HCT116 (cell line): ENCODE measurements at regions of chr19 and their contacts with region 1.

Region 1: DNA sequence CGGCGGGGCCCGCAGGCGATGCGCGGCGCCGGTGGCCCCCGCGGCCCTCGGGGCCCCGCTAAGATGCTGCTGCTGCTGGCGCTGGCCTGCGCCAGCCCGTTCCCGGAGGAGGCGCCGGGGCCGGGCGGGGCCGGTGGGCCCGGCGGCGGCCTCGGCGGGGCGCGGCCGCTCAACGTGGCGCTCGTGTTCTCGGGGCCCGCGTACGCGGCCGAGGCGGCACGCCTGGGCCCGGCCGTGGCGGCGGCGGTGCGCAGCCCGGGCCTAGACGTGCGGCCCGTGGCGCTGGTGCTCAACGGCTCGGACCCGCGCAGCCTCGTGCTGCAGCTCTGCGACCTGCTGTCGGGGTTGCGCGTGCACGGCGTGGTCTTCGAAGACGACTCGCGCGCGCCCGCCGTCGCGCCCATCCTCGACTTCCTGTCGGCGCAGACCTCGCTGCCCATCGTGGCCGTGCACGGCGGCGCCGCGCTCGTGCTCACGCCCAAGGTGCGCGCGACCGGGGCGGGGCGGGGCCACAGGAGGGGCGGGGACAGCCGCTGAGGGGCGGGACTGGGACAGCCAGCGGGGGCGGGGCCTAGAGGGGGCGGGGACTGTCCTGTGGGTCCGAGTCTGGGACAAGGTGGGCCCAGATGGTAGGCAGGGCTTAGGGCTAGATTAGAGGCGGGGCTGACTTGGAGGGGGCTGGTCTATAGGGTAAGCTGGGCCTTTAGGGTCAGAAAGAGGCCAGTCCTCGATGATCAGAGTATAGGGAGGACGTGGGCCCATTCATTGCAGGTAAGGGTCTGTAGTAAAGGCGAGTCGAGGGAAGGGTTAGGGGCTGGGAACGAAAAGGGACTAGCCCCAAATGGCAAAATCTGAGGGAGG is 5.1 kb downstream of the GRIN2D start:
- DNase-seq: peak; percentile 91
- ATAC-seq: peak; percentile 86
- H3K4me3 ChIP-seq: peak overlapping the region; percentile 75 to 87
- H3K27ac ChIP-seq: peak overlapping the region; percentile 96
- H3K4me1 ChIP-seq: peaks cover 22 to 61% of the 10 kb centered on the region in 2 experiments
- H3K27me3 ChIP-seq: no peaks in the 10 kb centered on the region
- CTCF ChIP-seq: no peak
- POLR2A ChIP-seq: peak; percentile 56
- RAD21 ChIP-seq: no peak

Region 2: GRCh38 chr19:47609906-47610894 is 788.4 kb before region 1 on chr19:
- CTCF ChIA-PET with region 1: no interaction called
- POLR2A ChIA-PET with region 1: interaction called, 10 read pairs
- RAD21 ChIA-PET with region 1: no interaction called
- intact Hi-C with region 1: no loop called
- DNase-seq: no peak
- ATAC-seq: no peak
- H3K4me3 ChIP-seq: peak overlapping the region; percentile 73 to 84
- H3K27ac ChIP-seq: peak overlapping the region; percentile 71; the same call in 1 of the 2 replicates
- H3K4me1 ChIP-seq: peaks cover 10 to 20% of the 10 kb centered on the region in 2 experiments
- H3K27me3 ChIP-seq: no peaks in the 10 kb centered on the region
- CTCF ChIP-seq: no peak
- POLR2A ChIP-seq: no peak
- RAD21 ChIP-seq: no peak

Region 3: GRCh38 chr19:47790398-47790814 is 608.2 kb before region 1 on chr19:
- CTCF ChIA-PET with region 1: no interaction called
- POLR2A ChIA-PET with region 1: no interaction called
- RAD21 ChIA-PET with region 1: no interaction called
- intact Hi-C with region 1: no loop called
- DNase-seq: peak; percentile 88
- ATAC-seq: peak; percentile 88
- H3K4me3 ChIP-seq: peak overlapping the region; percentile 21 to 23
- H3K27ac ChIP-seq: peak overlapping the region; percentile 81
- H3K4me1 ChIP-seq: peaks cover 14 to 25% of the 10 kb centered on the region in 2 experiments
- H3K27me3 ChIP-seq: no peaks in the 10 kb centered on the region
- CTCF ChIP-seq: peak; percentile 87 to 98 (median 97)
- POLR2A ChIP-seq: no peak
- RAD21 ChIP-seq: peak; percentile 64

Region 4: DNA sequence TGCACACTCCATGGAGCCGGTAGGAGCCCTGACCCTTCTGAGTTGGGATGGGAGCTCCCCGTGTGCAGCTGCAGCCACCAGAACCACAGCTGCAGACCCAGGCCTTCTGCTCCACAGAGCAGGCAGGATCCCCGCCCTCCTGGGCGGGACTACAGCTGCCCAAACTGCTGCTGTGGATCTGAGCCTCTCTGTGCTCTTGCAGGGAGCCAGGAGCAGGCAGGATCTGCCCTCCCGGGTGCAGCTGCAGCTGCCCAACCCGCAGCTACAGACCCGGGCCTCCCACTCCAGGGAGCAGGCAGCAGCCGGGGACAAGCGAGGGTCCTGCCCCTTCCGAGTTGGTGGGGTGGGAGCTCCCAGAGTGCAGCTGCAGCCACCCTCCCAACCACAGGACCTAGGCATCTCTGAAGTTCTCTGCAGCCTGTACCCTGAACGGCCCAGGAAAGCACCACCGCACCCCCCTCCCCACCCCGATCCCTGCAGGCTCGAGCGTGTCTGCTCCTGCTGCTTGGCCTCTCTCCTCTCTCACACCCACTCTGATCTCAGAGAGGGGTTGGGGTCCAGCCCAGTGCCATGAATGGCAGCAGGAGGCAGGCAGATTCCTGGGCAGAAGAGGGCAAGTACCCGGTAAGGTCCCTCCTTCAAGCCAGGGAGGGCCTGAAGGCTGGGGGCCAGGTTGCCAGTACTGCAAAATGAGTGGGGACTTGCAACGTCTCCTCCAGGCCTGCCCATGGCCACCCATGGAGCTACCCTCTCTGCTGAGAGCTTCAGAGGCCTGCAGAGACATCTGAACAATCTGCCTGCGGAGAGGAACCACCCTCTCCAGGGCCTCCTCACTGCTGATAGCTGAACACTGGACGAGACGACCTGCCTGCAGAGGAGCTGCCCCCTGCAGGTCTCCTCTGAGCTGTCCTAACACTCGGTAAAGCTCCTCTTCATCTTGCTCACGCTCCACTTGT is 89.7 kb before region 1 on chr19:
- CTCF ChIA-PET with region 1: no interaction called
- POLR2A ChIA-PET with region 1: no interaction called
- RAD21 ChIA-PET with region 1: no interaction called
- intact Hi-C with region 1: no loop called
- DNase-seq: no peak
- ATAC-seq: peak; percentile 84
- H3K4me3 ChIP-seq: no peak overlapping the region
- H3K27ac ChIP-seq: no peak overlapping the region
- H3K4me1 ChIP-seq: peaks cover 0 to 3% of the 10 kb centered on the region in 2 experiments; a peak in 1 of 4 replicates
- H3K27me3 ChIP-seq: no peaks in the 10 kb centered on the region
- CTCF ChIP-seq: peak in 2 of 3 experiments; percentile 22 to 28; a peak in 1 of 6 replicates
- POLR2A ChIP-seq: no peak
- RAD21 ChIP-seq: peak; percentile 35; the same call in 1 of the 2 replicates

Region 5: GRCh38 chr19:48415395-48415794 is 16.8 kb after region 1 on chr19:
- CTCF ChIA-PET with region 1: no interaction called
- POLR2A ChIA-PET with region 1: interaction called, 8 read pairs
- RAD21 ChIA-PET with region 1: no interaction called
- intact Hi-C with region 1: loop called (anchors 2 kb)
- DNase-seq: peak; percentile 84
- ATAC-seq: peak; percentile 85
- H3K4me3 ChIP-seq: no peak overlapping the region
- H3K27ac ChIP-seq: no peak overlapping the region
- H3K4me1 ChIP-seq: peaks cover 10 to 30% of the 10 kb centered on the region in 2 experiments
- H3K27me3 ChIP-seq: no peaks in the 10 kb centered on the region
- CTCF ChIP-seq: no peak
- POLR2A ChIP-seq: no peak
- RAD21 ChIP-seq: no peak

Region 6: GRCh38 chr19:48543121-48544056 is 144.8 kb after region 1 on chr19:
- CTCF ChIA-PET with region 1: no interaction called
- POLR2A ChIA-PET with region 1: no interaction called
- RAD21 ChIA-PET with region 1: no interaction called
- intact Hi-C with region 1: no loop called
- DNase-seq: peak; percentile 53
- ATAC-seq: peak; percentile 88
- H3K4me3 ChIP-seq: peak overlapping the region; percentile 35 to 36
- H3K27ac ChIP-seq: peak overlapping the region; percentile 72
- H3K4me1 ChIP-seq: peaks cover 11 to 22% of the 10 kb centered on the region in 2 experiments
- H3K27me3 ChIP-seq: no peaks in the 10 kb centered on the region
- CTCF ChIP-seq: no peak
- POLR2A ChIP-seq: no peak
- RAD21 ChIP-seq: no peak